ENCODE measurements at regions of chr6 and their contacts with region 1.

Region 1: DNA sequence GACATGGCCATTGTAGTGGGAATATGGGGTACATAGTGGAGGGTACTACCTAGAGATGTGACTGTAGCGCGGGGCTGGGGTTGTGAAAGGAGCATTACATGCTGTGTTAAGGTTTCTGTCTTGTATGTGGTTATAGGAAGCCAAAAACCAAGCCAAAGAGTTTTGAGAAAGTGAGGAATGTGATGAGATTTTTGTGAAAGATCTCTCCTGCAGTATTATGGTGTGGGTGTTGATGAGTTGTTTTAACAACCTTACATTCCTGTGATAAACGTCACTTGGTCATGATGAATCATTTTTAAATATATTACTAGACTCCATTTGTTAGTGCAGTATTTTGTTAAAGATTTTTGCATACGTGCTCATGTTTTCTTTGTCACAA is 48.9 kb downstream of the ZFAND3 start:
- DNase-seq: peak in 1 of 2 donors; percentile 26
- ATAC-seq: peak; percentile 66 to 79 (median 74)
- H3K4me3 ChIP-seq: no peak overlapping the region
- H3K4me3 Mint-ChIP-seq: peak overlapping the region; percentile 69
- H3K27ac ChIP-seq: peak overlapping the region; percentile 88
- H3K27ac Mint-ChIP-seq: peak overlapping the region; percentile 87 to 93
- H3K4me1 ChIP-seq: peaks cover 25% of the 10 kb centered on the region
- H3K4me1 Mint-ChIP-seq: peaks cover 77 to 83% of the 10 kb centered on the region in 2 donors
- H3K27me3 ChIP-seq: no peaks in the 10 kb centered on the region
- H3K27me3 Mint-ChIP-seq: no peaks in the 10 kb centered on the region
- CTCF ChIP-seq: no peak

Region 2: GRCh38 chr6:37819177-37819823 is 49.1 kb before region 1 on chr6 and contains the start of gene ZFAND3:
- intact Hi-C with region 1: loop called (anchors 1 kb)
- DNase-seq: peak; percentile 94 to 95
- ATAC-seq: peak; percentile 78 to 92 (median 84)
- H3K4me3 ChIP-seq: peak within 1 kb of the TSS; percentile 76
- H3K4me3 Mint-ChIP-seq: peak within 1 kb of the TSS; percentile 97
- H3K27ac ChIP-seq: peak within 1 kb of the TSS; percentile 92
- H3K27ac Mint-ChIP-seq: peak within 1 kb of the TSS; percentile 97 to 99
- H3K4me1 ChIP-seq: peaks cover 31% of the 10 kb centered on the region
- H3K4me1 Mint-ChIP-seq: peaks cover 47 to 51% of the 10 kb centered on the region in 2 donors
- H3K27me3 ChIP-seq: no peaks in the 10 kb centered on the region
- H3K27me3 Mint-ChIP-seq: no peaks in the 10 kb centered on the region
- CTCF ChIP-seq: no peak
- total RNA-seq, gene ZFAND3: 87.7 to 97.4 (median 90.1) TPM

Region 3: GRCh38 chr6:37851997-37852524 is 16.4 kb before region 1 on chr6:
- intact Hi-C with region 1: loop called (anchors 2 kb)
- DNase-seq: no peak
- ATAC-seq: peak in 1 of 3 donors; percentile 24
- H3K4me3 ChIP-seq: no peak overlapping the region
- H3K4me3 Mint-ChIP-seq: peak overlapping the region; percentile 61
- H3K27ac ChIP-seq: no peak overlapping the region
- H3K27ac Mint-ChIP-seq: peak overlapping the region; percentile 37 to 62
- H3K4me1 ChIP-seq: peaks cover 14% of the 10 kb centered on the region
- H3K4me1 Mint-ChIP-seq: peaks cover 65 to 73% of the 10 kb centered on the region in 2 donors
- H3K27me3 ChIP-seq: no peaks in the 10 kb centered on the region
- H3K27me3 Mint-ChIP-seq: no peaks in the 10 kb centered on the region
- CTCF ChIP-seq: no peak

Region 4: DNA sequence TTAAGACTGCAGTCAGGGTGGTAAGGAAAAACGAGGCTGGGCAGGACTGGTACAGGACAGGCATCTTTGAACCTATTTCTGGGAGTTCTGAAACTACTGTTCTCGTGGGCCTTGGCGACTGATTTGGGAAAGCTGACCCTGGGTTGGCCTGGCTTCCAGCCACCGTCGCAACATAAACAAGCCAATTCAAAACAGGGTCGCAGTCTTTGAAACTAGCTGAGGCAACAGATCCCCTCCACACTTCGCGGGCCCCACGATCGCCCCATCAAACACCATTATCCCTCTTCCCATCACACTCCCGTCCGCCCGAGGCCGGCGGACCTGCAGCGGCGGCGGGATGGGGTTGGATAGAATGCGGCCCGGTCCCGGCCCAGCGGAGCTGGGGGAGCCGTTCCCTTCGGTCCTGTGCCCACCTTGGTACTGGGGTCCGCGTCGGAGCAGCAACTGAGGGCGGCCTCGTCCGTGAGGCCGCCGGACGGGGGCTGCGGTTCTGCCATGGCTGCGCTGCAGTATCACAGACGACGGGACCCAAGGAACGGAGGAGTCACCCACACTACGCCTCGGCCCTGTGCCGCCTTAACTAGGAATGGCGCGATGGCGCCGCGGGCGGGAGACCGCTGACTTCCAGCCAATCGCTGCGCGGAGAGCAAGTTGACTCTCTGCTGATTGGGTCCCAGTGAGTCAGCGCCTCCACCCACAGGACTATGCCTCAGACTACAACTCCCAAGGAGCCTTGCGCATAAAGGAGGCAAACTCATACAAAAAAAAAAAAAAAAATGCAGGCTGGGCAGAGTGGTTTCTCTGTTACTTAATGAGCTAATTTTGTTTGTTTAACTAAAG is 834.3 kb after region 1 on chr6 and contains the start of gene GLO1:
- intact Hi-C with region 1: loop called (anchors 5 kb)
- DNase-seq: peak; percentile 91 to 98
- ATAC-seq: peak; percentile 99 to 100 (median 99)
- H3K4me3 ChIP-seq: peak within 1 kb of the TSS; percentile 74
- H3K4me3 Mint-ChIP-seq: peak within 1 kb of the TSS; percentile 95
- H3K27ac ChIP-seq: peak within 1 kb of the TSS; percentile 85
- H3K27ac Mint-ChIP-seq: peak within 1 kb of the TSS; percentile 87 to 96
- H3K4me1 ChIP-seq: peaks cover 6% of the 10 kb centered on the region
- H3K4me1 Mint-ChIP-seq: peaks cover 20 to 45% of the 10 kb centered on the region in 2 donors
- H3K27me3 ChIP-seq: peaks cover 3% of the 10 kb centered on the region
- H3K27me3 Mint-ChIP-seq: peaks cover 14 to 18% of the 10 kb centered on the region in 2 donors
- CTCF ChIP-seq: no peak
- total RNA-seq, gene GLO1: 24.2 to 31.3 (median 27.6) TPM